ENCODE measurements at regions of chr7 and their contacts with region 1.

Region 1: GRCh38 chr7:132557489-132558044 is 18.7 kb downstream of the PLXNA4 start:
- DNase-seq: no peak
- H3K4me3 ChIP-seq: no peak overlapping the region
- H3K4me3 Mint-ChIP-seq: peak overlapping the region in 1 of 8 donors; percentile 37
- H3K27ac ChIP-seq: no peak overlapping the region
- H3K27ac Mint-ChIP-seq: no peak overlapping the region
- H3K4me1 ChIP-seq: no peaks in the 10 kb centered on the region
- H3K4me1 Mint-ChIP-seq: peaks cover 0 to 3% (median under 1%) of the 10 kb centered on the region in 4 donors
- H3K27me3 ChIP-seq: no peaks in the 10 kb centered on the region
- H3K27me3 Mint-ChIP-seq: peaks cover 0 to 1% of the 10 kb centered on the region in 2 donors

Region 2: GRCh38 chr7:132394283-132395198 is 163.0 kb before region 1 on chr7:
- CTCF ChIA-PET with region 1: interaction called, 18 read pairs
- POLR2A ChIA-PET with region 1: interaction called, 3 read pairs
- intact Hi-C with region 1: no loop called
- DNase-seq: peak; percentile 31 to 47 (median 38)
- H3K4me3 ChIP-seq: no peak overlapping the region
- H3K4me3 Mint-ChIP-seq: no peak overlapping the region
- H3K27ac ChIP-seq: no peak overlapping the region
- H3K27ac Mint-ChIP-seq: no peak overlapping the region
- H3K4me1 ChIP-seq: peaks cover 3% of the 10 kb centered on the region
- H3K4me1 Mint-ChIP-seq: peaks cover 2 to 12% (median 5%) of the 10 kb centered on the region in 4 donors
- H3K27me3 ChIP-seq: no peaks in the 10 kb centered on the region
- H3K27me3 Mint-ChIP-seq: peaks cover 2 to 8% of the 10 kb centered on the region in 2 donors

Region 3: DNA sequence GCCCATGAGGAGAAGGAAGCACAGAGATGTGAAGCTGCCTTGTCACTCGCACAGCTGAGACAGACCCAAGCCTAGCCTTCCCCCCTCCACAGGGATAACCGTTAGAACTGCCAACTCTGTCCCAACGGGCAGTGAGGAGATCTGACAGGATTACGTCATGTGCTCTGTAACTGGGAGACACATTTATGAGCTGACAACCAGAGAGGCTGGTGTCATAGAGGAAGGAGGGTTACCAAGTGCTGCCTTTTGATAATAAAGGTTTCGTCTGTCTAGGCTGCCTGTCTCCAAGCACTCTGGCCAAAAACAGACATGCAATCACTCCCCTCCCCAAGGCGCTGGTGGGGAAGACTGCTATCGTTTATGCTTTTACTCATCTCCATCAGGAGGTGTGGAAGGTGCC is 147.2 kb before region 1 on chr7:
- CTCF ChIA-PET with region 1: no interaction called
- POLR2A ChIA-PET with region 1: no interaction called
- intact Hi-C with region 1: no loop called
- DNase-seq: no peak
- H3K4me3 ChIP-seq: no peak overlapping the region
- H3K4me3 Mint-ChIP-seq: no peak overlapping the region
- H3K27ac ChIP-seq: no peak overlapping the region
- H3K27ac Mint-ChIP-seq: peak overlapping the region in 1 of 7 donors; percentile 47
- H3K4me1 ChIP-seq: no peaks in the 10 kb centered on the region
- H3K4me1 Mint-ChIP-seq: peaks cover 2 to 8% (median 7%) of the 10 kb centered on the region in 4 donors
- H3K27me3 ChIP-seq: no peaks in the 10 kb centered on the region
- H3K27me3 Mint-ChIP-seq: no peaks in the 10 kb centered on the region

Region 4: DNA sequence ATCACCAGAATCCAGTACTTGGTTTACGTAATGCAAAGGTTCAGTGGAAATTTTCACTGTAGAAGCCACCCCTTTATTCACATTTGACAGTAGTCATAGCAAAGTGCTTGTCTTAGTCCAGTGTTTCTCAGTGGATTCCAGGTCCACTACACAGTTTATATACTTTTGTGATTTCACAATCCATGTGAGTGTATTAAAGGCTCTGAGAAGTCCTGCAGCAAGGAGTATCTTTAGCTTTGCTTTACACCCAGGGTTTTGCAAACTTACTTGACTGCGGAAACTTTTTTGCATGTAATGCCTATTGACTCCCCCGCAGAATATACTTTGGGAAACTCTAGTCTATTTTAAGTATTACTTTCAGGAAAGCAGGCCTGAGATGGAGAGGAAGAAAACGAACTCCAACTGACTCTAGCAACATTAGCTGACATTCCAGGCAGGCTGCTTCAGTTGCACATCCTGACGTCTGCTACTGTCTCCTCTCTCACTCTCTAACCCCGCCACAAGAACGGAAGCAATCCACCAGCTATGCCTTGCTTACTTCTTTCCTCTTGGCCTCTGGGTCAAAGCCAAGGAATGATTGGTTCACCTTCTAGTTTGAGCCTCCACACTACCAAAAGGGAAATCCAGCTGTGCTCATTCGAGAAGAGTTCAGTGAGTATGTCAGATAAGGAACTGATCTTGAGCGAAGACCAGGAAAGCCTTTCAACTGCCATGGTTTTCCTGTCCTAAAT is 12.5 kb after region 1 on chr7:
- CTCF ChIA-PET with region 1: no interaction called
- POLR2A ChIA-PET with region 1: no interaction called
- intact Hi-C with region 1: no loop called
- DNase-seq: no peak
- H3K4me3 ChIP-seq: no peak overlapping the region
- H3K4me3 Mint-ChIP-seq: no peak overlapping the region
- H3K27ac ChIP-seq: no peak overlapping the region
- H3K27ac Mint-ChIP-seq: no peak overlapping the region
- H3K4me1 ChIP-seq: no peaks in the 10 kb centered on the region
- H3K4me1 Mint-ChIP-seq: peaks cover 3 to 16% (median 7%) of the 10 kb centered on the region in 4 donors
- H3K27me3 ChIP-seq: peaks cover 28% of the 10 kb centered on the region
- H3K27me3 Mint-ChIP-seq: peaks cover 43 to 71% of the 10 kb centered on the region in 2 donors